ENCODE measurements at regions of chr6 and their contacts with region 1.

Region 1: GRCh38 chr6:30877419-30878371 is 6.6 kb upstream of the DDR1 start:
- DNase-seq: peak; percentile 59
- ATAC-seq: peak; percentile 91
- H3K4me3 ChIP-seq: peak overlapping the region; percentile 61
- H3K27ac ChIP-seq: peak overlapping the region; percentile 68
- H3K4me1 ChIP-seq: peaks cover 21% of the 10 kb centered on the region
- H3K27me3 ChIP-seq: no peaks in the 10 kb centered on the region
- CTCF ChIP-seq: peak; percentile 91 to 95 (median 93); a peak in 5 of 6 replicates
- EP300 ChIP-seq: no peak
- POLR2A ChIP-seq: 0 out of 2 replicates have a peak, but pooled peaks have one; percentile 28
- RAD21 ChIP-seq: peak; percentile 95

Region 2: GRCh38 chr6:30836431-30836866 is 41.2 kb before region 1 on chr6:
- CTCF ChIA-PET with region 1: interaction called, 90 read pairs
- POLR2A ChIA-PET with region 1: interaction called, 4 read pairs
- RAD21 ChIA-PET with region 1: interaction called, 144 read pairs
- SMC1A ChIA-PET with region 1: interaction called, 6 read pairs
- in situ Hi-C with region 1: no loop called
- intact Hi-C with region 1: no loop called
- DNase-seq: no peak
- ATAC-seq: no peak
- H3K4me3 ChIP-seq: no peak overlapping the region
- H3K27ac ChIP-seq: no peak overlapping the region
- H3K4me1 ChIP-seq: no peaks in the 10 kb centered on the region
- H3K27me3 ChIP-seq: no peaks in the 10 kb centered on the region; a peak in 1 of 4 replicates
- CTCF ChIP-seq: no peak
- EP300 ChIP-seq: no peak
- POLR2A ChIP-seq: no peak
- RAD21 ChIP-seq: no peak